ENCODE measurements at regions of chr16 and their contacts with region 1.

Region 1: DNA sequence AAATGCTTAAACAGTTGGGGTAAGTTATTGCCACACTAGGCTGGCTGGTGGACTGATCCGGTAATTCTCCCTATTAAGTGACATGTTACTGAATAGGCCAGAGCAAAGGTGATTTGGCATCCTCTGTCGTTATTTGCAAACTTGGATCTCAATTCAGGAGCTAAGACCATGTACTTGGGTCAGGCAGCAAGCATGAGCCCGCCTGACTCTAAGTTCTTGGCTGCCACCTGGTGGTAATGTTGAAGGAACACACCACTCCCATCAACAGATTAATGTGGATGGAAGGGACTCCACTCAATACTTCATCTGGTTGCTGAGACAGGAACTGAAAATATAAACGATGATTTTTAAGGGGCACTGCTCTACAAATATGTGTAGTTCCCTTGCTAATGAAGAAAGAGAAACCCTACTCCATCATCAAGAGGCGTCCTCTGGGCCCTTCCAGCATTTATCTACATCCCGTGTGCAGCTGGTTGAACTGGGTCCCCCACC is 70.8 kb downstream of the EMP2 start:
- DNase-seq: peak; percentile 53
- ATAC-seq: peak; percentile 93

Region 2: DNA sequence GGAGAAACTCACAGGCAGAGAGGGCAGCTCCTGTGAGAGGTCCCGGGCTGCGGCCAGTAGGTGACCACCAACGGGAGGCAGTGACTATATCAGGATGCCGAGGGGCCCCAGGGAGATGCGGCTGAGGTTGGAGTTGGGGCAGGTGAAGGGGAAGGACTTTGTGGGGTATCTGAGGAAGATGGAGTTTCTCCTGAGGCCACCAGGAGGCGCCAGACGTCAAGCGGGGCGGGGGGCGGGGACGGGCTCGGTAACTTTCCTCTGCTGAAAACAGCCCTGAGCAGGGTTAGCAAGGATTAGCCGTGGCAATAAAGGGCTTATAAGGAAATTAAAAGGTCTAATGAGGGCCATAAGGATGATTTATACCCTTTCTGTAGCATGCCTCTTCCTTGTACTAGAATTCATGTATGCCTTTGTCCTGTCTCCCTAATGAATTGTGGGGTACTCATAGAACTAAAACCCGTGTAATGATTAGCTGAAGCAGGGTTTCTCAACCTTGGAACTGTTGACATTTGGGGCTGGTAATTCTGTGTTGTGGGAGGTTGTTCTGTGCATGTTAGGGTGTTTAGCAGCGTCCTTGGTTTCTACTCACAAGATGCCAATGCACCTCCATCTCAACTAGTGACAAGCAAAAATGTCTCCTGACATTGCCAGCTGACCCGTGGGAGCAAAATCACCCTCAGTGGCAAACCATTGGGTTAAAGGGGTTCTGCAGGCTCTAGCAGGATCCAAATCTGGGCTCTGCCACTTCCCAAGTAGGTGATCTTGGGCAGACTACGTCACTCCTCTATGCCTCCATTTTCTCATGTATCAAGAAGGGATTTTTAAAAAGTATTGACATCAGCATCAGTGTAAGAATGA is 252.6 kb before region 1 on chr16:
- intact Hi-C with region 1: loop called (anchors 5 kb)
- DNase-seq: peak; percentile 42
- ATAC-seq: peak; percentile 68

Region 3: GRCh38 chr16:10314811-10315210 is 194.8 kb before region 1 on chr16:
- intact Hi-C with region 1: loop called (anchors 2 kb)
- DNase-seq: no peak
- ATAC-seq: no peak

Region 4: GRCh38 chr16:10737068-10737625 is 227.6 kb after region 1 on chr16:
- intact Hi-C with region 1: loop called (anchors 2 kb)
- DNase-seq: no peak
- ATAC-seq: peak; percentile 77

Region 5: DNA sequence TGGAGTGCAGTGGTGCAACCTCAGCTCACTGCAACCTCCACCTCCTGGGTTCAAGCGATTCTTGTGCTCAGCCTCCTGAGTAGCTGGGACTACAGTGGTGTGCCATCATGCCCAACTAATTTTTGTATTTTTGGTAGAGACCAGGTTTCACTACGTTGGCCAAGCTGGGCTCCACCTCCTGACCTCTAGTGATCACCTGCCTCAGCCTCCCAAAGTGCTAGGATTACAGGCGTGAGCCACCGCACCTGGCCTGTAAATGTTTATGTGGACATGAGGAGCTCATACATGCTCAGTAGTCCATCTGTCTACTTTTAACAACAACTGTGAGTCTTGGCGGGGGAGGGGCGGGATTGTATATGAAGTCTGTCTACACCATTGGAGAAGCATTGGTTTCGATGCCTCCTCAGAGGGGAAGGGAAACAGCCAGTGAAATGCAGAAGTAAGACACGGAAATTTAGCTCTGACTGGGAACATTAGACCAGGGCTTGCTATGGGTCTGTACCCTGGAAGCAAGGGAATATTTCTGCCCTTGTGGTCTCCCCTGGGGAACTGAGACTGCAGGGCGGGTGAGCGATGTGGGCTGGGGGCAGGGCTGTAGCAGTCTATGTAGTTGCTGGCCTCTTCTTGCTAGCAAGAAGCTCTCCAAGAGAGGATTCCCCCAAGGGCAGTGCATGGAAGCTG is 243.4 kb after region 1 on chr16:
- intact Hi-C with region 1: no loop called
- DNase-seq: peak; percentile 83
- ATAC-seq: peak; percentile 15

Measured in Right ventricle myocardium superior (tissue), 1 donor.